Naive thymus-derived CD4-positive, alpha-beta T cell (primary cell): ENCODE measurements at regions of chr2 and their contacts with region 1.

Region 1: DNA sequence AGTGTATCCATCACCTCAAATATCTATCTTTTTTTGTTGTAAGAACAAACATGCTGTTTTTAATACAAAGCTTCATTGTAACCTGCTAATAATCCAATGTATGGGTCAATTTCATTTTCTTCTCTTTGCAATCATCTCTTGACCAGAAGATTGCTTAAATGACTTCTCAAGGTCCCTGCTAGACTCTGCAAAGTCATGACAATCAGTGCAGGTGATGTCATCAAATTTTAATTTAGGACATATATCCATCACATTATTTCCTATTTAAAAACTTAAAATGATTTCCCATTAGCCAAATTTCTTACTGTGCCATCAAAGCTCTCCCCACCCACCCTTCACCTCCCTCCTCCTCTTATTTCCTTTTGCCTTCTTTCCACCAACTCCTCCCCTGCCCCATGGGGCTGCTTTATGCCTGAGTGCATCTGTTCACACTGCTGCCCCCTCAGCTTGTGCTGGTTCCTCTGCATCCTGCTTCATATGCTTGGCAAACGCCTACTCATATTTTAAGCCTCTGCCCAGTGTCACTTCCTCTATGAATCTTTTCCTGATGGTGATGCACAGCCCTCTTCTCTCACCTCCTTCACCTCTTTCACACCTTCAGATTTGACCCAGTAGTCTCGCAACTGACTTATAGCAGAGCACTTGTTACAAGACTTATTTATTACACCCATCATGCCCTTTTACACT is 20.3 kb downstream of the PLEK start:
- DNase-seq: peak in 1 of 9 donors; percentile 31
- ATAC-seq: peak; percentile 59
- H3K4me3 ChIP-seq: no peak overlapping the region
- H3K4me3 Mint-ChIP-seq: peak overlapping the region in 1 of 10 donors; percentile 14
- H3K27ac ChIP-seq: no peak overlapping the region
- H3K27ac Mint-ChIP-seq: peak overlapping the region in 1 of 9 donors; percentile 3
- H3K4me1 ChIP-seq: peaks cover 0 to 63% of the 10 kb centered on the region in 2 donors
- H3K4me1 Mint-ChIP-seq: peaks cover 15 to 45% (median 27%) of the 10 kb centered on the region in 7 donors
- H3K27me3 ChIP-seq: no peaks in the 10 kb centered on the region
- H3K27me3 Mint-ChIP-seq: peaks cover 0 to 8% (median 0%) of the 10 kb centered on the region in 5 donors

Region 2: GRCh38 chr2:68319398-68320117 is 65.8 kb before region 1 on chr2 and contains the start of gene CNRIP1:
- CTCF ChIA-PET with region 1: no interaction called
- POLR2A ChIA-PET with region 1: no interaction called
- intact Hi-C with region 1: no loop called
- DNase-seq: no peak
- ATAC-seq: peak; percentile 64
- H3K4me3 ChIP-seq: peak within 1 kb of the TSS; percentile 42
- H3K4me3 Mint-ChIP-seq: peak within 1 kb of the TSS; percentile 46 to 82 (median 74)
- H3K27ac ChIP-seq: no peak within 1 kb of the TSS
- H3K27ac Mint-ChIP-seq: no peak within 1 kb of the TSS
- H3K4me1 ChIP-seq: peaks cover 6 to 8% of the 10 kb centered on the region in 2 donors
- H3K4me1 Mint-ChIP-seq: peaks cover 0 to 15% (median 10%) of the 10 kb centered on the region in 7 donors
- H3K27me3 ChIP-seq: peaks cover 0 to 19% of the 10 kb centered on the region in 2 donors
- H3K27me3 Mint-ChIP-seq: peaks cover 45 to 84% (median 62%) of the 10 kb centered on the region in 5 donors
- total RNA-seq, gene CNRIP1: 0.19 to 0.78 (median 0.38) TPM in 3 of 5 experiments, not detected in the others

Region 3: GRCh38 chr2:68362069-68362468 is 23.3 kb before region 1 on chr2:
- CTCF ChIA-PET with region 1: no interaction called
- POLR2A ChIA-PET with region 1: no interaction called
- intact Hi-C with region 1: loop called in 1 of 2 experiments (anchors 2 kb)
- DNase-seq: peak; percentile 62 to 81 (median 76)
- ATAC-seq: peak; percentile 87
- H3K4me3 ChIP-seq: peak overlapping the region; percentile 37
- H3K4me3 Mint-ChIP-seq: peak overlapping the region in 9 of 10 donors; percentile 21 to 87 (median 74)
- H3K27ac ChIP-seq: no peak overlapping the region
- H3K27ac Mint-ChIP-seq: peak overlapping the region in 6 of 9 donors; percentile 10 to 81 (median 18)
- H3K4me1 ChIP-seq: peaks cover 0 to 20% of the 10 kb centered on the region in 2 donors
- H3K4me1 Mint-ChIP-seq: peaks cover 6 to 19% (median 10%) of the 10 kb centered on the region in 7 donors
- H3K27me3 ChIP-seq: no peaks in the 10 kb centered on the region
- H3K27me3 Mint-ChIP-seq: peaks cover 0 to 23% (median 0%) of the 10 kb centered on the region in 5 donors

Region 4: DNA sequence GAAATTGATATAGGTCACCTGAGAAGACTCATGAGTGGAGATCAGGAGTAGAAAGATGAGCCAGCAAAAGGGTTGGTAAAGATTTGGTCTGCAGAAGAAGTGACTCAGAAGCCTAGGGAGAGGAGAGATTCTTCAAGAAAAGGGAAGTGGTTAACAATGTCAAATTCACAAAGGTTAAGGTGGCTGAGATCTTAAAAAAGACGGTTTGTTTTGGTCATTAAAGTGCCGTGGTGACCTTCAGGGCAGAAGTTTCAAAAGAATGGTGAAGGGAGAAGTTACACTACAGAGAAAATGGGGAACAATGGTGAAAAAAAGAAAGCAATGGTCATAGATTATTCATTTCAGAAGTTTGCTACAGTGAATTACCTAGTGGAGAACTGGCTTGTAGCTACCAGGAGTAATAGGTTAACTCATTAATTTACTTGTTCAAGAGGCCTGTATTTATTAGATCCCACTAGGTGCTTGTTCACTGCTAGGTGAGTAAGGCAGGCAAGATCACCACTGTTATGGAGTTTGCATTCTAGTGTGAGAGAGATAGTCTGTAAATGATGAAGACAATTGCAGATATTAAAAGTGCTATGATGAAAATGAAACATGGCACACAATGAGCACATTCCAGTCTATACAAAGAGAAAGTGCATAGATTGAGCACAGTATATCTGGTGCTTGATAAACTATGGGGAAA is 38.7 kb after region 1 on chr2:
- CTCF ChIA-PET with region 1: no interaction called
- POLR2A ChIA-PET with region 1: no interaction called
- intact Hi-C with region 1: loop called in 1 of 2 experiments (anchors 5 kb)
- DNase-seq: no peak
- ATAC-seq: peak; percentile 85
- H3K4me3 ChIP-seq: no peak overlapping the region
- H3K4me3 Mint-ChIP-seq: no peak overlapping the region
- H3K27ac ChIP-seq: no peak overlapping the region
- H3K27ac Mint-ChIP-seq: no peak overlapping the region
- H3K4me1 ChIP-seq: peaks cover 0 to 57% of the 10 kb centered on the region in 2 donors
- H3K4me1 Mint-ChIP-seq: peaks cover 0 to 5% (median 0%) of the 10 kb centered on the region in 7 donors
- H3K27me3 ChIP-seq: no peaks in the 10 kb centered on the region
- H3K27me3 Mint-ChIP-seq: peaks cover 0 to 3% (median 0%) of the 10 kb centered on the region in 5 donors

Region 5: DNA sequence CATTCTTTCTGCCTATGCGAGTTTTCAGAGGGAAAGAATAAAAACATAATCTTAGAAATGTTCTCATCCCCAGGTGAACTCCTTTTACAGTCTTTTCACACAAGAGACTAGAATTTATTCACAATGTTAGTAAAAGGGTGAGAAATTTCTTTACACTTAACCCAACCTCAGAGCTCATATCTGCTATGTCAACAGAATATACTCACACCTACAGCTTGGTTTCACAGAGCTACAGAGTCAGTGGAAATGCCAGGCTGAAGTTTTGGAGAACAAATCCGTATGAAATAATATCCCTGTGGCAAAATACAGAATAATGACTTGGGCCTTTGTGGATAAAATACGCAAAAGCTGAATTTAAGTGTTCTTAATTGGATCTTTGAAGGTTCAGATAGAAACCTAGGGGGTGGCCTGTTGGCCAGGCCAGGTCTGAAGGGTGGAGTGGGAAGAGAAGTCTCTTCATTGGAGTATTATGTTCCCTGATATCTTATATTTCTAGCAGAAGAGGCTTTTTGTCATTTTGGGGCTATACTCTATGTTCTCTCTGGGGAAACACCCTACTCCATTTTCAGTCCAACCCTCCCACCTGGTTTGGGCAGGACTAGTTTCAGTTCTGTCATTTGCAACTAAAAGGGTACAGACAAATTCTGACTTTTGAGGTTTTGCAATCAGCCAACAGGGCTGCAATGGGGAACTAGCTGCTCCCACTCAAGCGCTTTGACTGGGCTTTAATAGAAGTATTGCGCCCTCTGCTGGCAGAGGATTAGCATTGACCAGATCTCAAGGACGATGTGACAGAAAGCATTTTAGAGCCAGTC is 56.0 kb after region 1 on chr2:
- CTCF ChIA-PET with region 1: no interaction called
- POLR2A ChIA-PET with region 1: no interaction called
- intact Hi-C with region 1: loop called in 1 of 2 experiments (anchors 1 kb)
- DNase-seq: peak; percentile 52 to 79 (median 72)
- ATAC-seq: peak; percentile 97
- H3K4me3 ChIP-seq: no peak overlapping the region
- H3K4me3 Mint-ChIP-seq: no peak overlapping the region
- H3K27ac ChIP-seq: no peak overlapping the region
- H3K27ac Mint-ChIP-seq: peak overlapping the region in 4 of 9 donors; percentile 11 to 72 (median 40)
- H3K4me1 ChIP-seq: peaks cover 0 to 22% of the 10 kb centered on the region in 2 donors
- H3K4me1 Mint-ChIP-seq: peaks cover 0 to 16% (median 5%) of the 10 kb centered on the region in 7 donors
- H3K27me3 ChIP-seq: no peaks in the 10 kb centered on the region
- H3K27me3 Mint-ChIP-seq: peaks cover 0 to 19% (median 0%) of the 10 kb centered on the region in 5 donors

Region 6: DNA sequence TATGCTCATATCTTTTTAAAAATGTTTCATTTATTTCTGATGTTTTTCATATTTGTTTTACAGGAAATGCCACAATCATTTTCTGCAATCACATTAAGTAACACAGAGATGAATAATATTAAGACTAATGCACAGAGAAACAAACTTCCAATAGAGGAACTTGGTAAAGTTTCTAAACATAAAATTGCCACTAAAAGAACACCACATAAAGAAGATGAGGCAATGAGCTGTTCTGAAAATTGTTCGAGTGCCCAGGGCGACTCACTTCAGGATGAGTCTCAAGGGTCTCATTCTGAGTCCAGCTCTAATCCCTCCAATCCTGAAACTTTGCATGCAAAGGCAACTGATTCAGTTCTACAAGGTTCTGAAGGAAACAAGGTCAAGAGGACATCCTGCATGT is 152.4 kb after region 1 on chr2:
- CTCF ChIA-PET with region 1: no interaction called
- POLR2A ChIA-PET with region 1: no interaction called
- intact Hi-C with region 1: no loop called
- DNase-seq: no peak
- ATAC-seq: no peak
- H3K4me3 ChIP-seq: no peak overlapping the region
- H3K4me3 Mint-ChIP-seq: no peak overlapping the region
- H3K27ac ChIP-seq: no peak overlapping the region
- H3K27ac Mint-ChIP-seq: no peak overlapping the region
- H3K4me1 ChIP-seq: no peaks in the 10 kb centered on the region
- H3K4me1 Mint-ChIP-seq: peaks cover 0 to 4% (median 0%) of the 10 kb centered on the region in 7 donors
- H3K27me3 ChIP-seq: no peaks in the 10 kb centered on the region
- H3K27me3 Mint-ChIP-seq: no peaks in the 10 kb centered on the region

Region 7: DNA sequence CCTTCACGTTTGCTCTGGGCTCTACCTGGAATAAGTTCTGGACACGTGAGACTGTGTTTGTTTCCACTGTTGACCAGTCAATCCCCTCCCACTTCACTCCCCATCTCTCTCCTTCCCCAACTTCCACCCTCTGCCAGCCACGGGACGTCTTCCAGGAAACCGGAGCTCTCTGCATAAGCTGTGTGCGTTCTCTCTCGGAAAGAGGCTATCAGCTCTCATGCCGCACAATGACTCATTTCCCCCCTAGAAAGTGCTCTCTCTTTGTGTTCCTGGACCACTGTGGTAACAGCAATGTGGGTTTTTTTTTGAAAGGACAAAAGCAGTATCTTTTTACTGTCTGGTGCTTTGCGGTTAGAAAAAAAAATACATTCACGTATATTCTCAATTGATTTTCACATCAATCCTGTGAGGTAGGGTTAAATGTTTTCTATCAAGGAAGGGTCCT is 268.2 kb after region 1 on chr2:
- CTCF ChIA-PET with region 1: no interaction called
- POLR2A ChIA-PET with region 1: no interaction called
- intact Hi-C with region 1: loop called in 1 of 2 experiments (anchors 10 kb)
- DNase-seq: peak in 1 of 9 donors; percentile 53
- ATAC-seq: peak; percentile 64
- H3K4me3 ChIP-seq: no peak overlapping the region
- H3K4me3 Mint-ChIP-seq: peak overlapping the region in 2 of 10 donors; percentile 51 to 71
- H3K27ac ChIP-seq: no peak overlapping the region
- H3K27ac Mint-ChIP-seq: peak overlapping the region in 3 of 9 donors; percentile 5 to 58 (median 41)
- H3K4me1 ChIP-seq: peaks cover 6 to 8% of the 10 kb centered on the region in 2 donors
- H3K4me1 Mint-ChIP-seq: peaks cover 16 to 47% (median 20%) of the 10 kb centered on the region in 7 donors
- H3K27me3 ChIP-seq: no peaks in the 10 kb centered on the region
- H3K27me3 Mint-ChIP-seq: peaks cover 4 to 43% (median 17%) of the 10 kb centered on the region in 5 donors